ENCODE measurements at regions of chr11 and their contacts with region 1.

Region 1: GRCh38 chr11:74449369-74449931 is 17.9 kb downstream of the KCNE3 start:
- DNase-seq: peak; percentile 52
- ATAC-seq: peak; percentile 88
- H3K4me3 Mint-ChIP-seq: no peak overlapping the region
- H3K27ac Mint-ChIP-seq: no peak overlapping the region
- H3K4me1 Mint-ChIP-seq: peaks cover 3% of the 10 kb centered on the region
- H3K27me3 Mint-ChIP-seq: no peaks in the 10 kb centered on the region
- CTCF ChIP-seq: peak; percentile 78

Region 2: GRCh38 chr11:74255741-74256369 is 193.6 kb before region 1 on chr11:
- CTCF ChIA-PET with region 1: interaction called, 47 read pairs
- POLR2A ChIA-PET with region 1: no interaction called
- intact Hi-C with region 1: loop called (anchors 5 kb)
- DNase-seq: peak; percentile 60
- ATAC-seq: peak; percentile 81
- H3K4me3 Mint-ChIP-seq: no peak overlapping the region
- H3K27ac Mint-ChIP-seq: no peak overlapping the region
- H3K4me1 Mint-ChIP-seq: peaks cover 3% of the 10 kb centered on the region
- H3K27me3 Mint-ChIP-seq: no peaks in the 10 kb centered on the region
- CTCF ChIP-seq: peak; percentile 85

Region 3: GRCh38 chr11:74388678-74389327 is 60.6 kb before region 1 on chr11:
- CTCF ChIA-PET with region 1: interaction called, 190 read pairs
- POLR2A ChIA-PET with region 1: no interaction called
- intact Hi-C with region 1: loop called (anchors 1 kb)
- DNase-seq: peak; percentile 87
- ATAC-seq: peak; percentile 78
- H3K4me3 Mint-ChIP-seq: no peak overlapping the region
- H3K27ac Mint-ChIP-seq: peak overlapping the region; percentile 55
- H3K4me1 Mint-ChIP-seq: peaks cover 31% of the 10 kb centered on the region
- H3K27me3 Mint-ChIP-seq: no peaks in the 10 kb centered on the region
- CTCF ChIP-seq: peak; percentile 86

Region 4: DNA sequence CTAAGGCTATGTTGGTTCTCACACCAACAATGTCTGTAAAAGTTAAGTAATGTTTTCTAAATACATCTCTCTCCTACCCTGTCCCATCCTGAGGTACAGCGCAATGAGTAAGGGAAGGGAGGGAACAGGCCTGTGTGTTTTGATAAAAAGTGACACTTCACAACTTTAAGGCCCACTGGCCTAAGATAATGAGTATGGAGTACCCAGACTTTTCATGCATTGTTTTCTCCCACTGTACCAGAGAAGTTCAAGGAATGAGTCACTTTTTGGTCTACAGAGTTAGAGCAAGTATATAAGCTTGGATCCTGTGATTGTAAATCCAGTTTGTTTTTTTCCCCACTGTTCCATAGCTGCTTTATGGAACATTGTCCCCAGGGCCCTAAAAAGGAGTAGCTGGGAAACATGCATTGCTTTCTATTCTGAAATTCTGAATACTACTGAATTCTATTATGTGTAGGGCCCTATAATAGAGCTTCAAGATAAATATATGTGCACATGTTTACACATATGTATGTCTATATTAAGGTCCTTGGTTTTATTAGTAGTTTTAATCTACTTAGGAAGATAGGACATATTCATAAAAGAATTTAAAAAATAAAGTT is 11.9 kb before region 1 on chr11:
- CTCF ChIA-PET with region 1: interaction called, 23 read pairs
- POLR2A ChIA-PET with region 1: no interaction called
- intact Hi-C with region 1: no loop called
- DNase-seq: no peak
- ATAC-seq: no peak
- H3K4me3 Mint-ChIP-seq: no peak overlapping the region
- H3K27ac Mint-ChIP-seq: no peak overlapping the region
- H3K4me1 Mint-ChIP-seq: no peaks in the 10 kb centered on the region
- H3K27me3 Mint-ChIP-seq: peaks cover 1% of the 10 kb centered on the region
- CTCF ChIP-seq: no peak

Region 5: GRCh38 chr11:74462009-74462408 is 12.6 kb after region 1 on chr11:
- CTCF ChIA-PET with region 1: interaction called, 35 read pairs
- POLR2A ChIA-PET with region 1: no interaction called
- intact Hi-C with region 1: no loop called
- DNase-seq: no peak
- ATAC-seq: no peak
- H3K4me3 Mint-ChIP-seq: no peak overlapping the region
- H3K27ac Mint-ChIP-seq: no peak overlapping the region
- H3K4me1 Mint-ChIP-seq: no peaks in the 10 kb centered on the region
- H3K27me3 Mint-ChIP-seq: peaks cover 19% of the 10 kb centered on the region
- CTCF ChIP-seq: no peak

Region 6: DNA sequence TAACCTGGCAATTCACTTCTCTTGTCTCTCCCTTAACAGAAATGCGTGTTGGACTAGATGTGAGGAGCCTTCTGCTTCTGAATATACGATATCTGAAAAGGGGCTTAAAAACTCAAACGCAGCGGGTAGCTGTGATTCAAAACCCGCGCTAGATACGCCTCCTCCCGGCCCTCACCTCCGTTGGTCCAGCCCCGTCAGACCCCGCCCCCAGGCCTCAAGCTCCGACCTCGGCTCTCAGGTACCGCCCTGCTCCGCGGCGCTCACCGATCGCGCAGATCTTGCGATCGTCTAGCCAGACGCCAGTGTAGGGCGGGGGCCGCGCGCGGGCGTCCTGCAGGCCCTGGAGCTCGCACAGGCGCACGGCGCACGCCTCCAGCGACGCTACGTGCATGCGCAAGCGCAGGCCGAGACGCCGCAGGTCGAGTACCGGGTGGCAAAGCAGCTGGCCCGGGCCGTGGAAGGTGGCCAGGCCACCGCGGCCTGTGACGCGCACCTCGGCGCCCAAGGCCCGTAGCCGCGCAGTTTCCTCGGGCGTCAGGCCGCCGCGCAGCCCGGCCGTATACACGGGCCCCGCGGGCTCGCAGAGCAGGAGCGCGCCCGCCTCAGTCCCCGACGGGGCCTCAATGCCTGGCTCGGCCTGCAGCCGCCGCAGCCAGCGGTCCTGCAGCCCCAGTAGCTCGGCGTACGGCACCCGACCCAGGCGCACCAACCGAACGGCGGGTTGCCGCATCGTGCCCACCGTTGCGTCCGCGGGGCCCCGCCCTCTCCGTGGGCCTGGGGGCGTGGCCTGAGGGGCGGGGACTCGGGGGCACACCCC is 43.7 kb after region 1 on chr11 and contains the start of gene LIPT2:
- CTCF ChIA-PET with region 1: interaction called, 11 read pairs
- POLR2A ChIA-PET with region 1: no interaction called
- intact Hi-C with region 1: no loop called
- DNase-seq: peak; percentile 99
- ATAC-seq: peak; percentile 97
- H3K4me3 Mint-ChIP-seq: peak within 1 kb of the TSS; percentile 82
- H3K27ac Mint-ChIP-seq: peak within 1 kb of the TSS; percentile 89
- H3K4me1 Mint-ChIP-seq: peaks cover 16% of the 10 kb centered on the region
- H3K27me3 Mint-ChIP-seq: no peaks in the 10 kb centered on the region
- CTCF ChIP-seq: no peak
- total RNA-seq, gene LIPT2: 5.9 to 6.8 TPM

Region 7: DNA sequence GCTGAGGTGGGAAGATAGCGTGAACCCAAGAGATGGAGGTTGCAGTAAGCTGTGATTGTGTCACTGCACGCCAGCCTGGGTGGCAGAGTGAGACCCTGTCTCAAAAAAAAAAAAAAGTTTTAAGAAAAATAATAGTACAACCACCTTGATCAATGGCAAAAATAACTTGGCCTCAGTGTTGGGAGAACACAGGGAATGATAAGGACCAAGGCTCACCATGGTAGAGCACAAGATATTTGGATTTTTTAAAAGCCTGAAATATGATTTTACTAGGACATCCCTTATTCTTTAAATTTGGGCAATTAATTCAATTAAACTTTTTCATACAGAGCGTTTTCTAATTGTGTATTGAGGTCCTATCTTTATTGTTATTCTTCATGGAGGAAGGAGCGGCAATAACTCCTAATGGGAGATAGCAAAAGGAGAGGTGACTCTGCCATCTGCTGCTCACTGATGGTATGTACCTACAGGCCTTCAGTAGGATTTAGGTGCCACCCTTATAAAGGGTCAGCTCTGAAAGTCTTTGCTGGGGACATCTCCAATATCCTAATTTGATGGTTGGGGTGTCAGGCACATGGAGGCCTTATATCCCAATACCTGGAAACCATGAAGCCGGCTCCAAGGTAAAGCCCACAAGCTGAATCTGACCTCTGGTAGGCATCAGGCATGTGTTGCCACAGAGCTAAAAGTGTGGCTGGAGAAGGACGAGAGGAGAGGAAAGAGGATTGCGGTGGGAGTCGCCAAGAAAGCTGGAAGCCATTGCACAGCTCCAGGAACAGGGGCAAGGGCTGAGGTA is 121.0 kb after region 1 on chr11:
- CTCF ChIA-PET with region 1: interaction called, 96 read pairs
- POLR2A ChIA-PET with region 1: no interaction called
- intact Hi-C with region 1: loop called (anchors 2 kb)
- DNase-seq: peak; percentile 55
- ATAC-seq: peak; percentile 72
- H3K4me3 Mint-ChIP-seq: no peak overlapping the region
- H3K27ac Mint-ChIP-seq: no peak overlapping the region
- H3K4me1 Mint-ChIP-seq: no peaks in the 10 kb centered on the region
- H3K27me3 Mint-ChIP-seq: no peaks in the 10 kb centered on the region
- CTCF ChIP-seq: peak; percentile 72

Region 8: DNA sequence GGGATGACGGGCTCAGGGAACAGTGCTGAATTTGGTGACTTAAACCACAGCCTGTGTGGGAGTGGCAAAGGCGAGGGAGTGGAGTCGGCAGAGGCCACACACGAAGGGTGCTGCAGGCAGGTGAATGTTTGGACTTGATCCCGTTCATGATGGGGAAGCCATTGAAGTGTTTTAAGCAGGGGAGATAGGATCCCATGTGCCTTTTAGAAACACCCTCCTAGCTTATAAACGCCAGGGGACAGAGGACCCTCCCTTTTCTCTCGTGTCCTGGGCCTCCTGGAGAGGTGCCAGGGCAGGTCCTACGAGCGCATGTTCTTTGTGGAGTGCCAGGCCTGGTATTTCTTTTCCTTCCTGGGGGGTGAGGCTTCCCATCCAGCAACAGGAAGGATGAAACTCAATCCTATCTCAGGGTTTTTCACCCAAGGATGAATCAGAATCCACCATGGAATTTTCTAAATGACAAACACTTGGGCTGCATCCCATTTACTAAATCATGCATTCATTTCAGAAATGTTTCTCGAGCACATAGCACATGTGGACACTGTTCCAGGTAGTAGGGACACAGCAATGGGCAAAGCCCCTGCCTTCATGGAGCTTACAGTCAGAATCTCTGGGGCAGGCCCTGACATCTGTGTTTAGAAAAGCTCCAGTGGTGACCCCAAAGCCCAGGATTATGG is 222.2 kb after region 1 on chr11:
- CTCF ChIA-PET with region 1: no interaction called
- POLR2A ChIA-PET with region 1: no interaction called
- intact Hi-C with region 1: no loop called
- DNase-seq: no peak
- ATAC-seq: no peak
- H3K4me3 Mint-ChIP-seq: no peak overlapping the region
- H3K27ac Mint-ChIP-seq: no peak overlapping the region
- H3K4me1 Mint-ChIP-seq: no peaks in the 10 kb centered on the region
- H3K27me3 Mint-ChIP-seq: no peaks in the 10 kb centered on the region
- CTCF ChIP-seq: no peak